Endothelial cell of umbilical vein (primary cell): ENCODE measurements at regions of chr5 and their contacts with region 1.

Region 1: GRCh38 chr5:90932052-90932699 is 373.6 kb downstream of the ADGRV1 start:
- DNase-seq: peak; percentile 93
- H3K4me3 ChIP-seq: no peak overlapping the region
- H3K27ac ChIP-seq: no peak overlapping the region
- H3K4me1 ChIP-seq: peaks cover 5% of the 10 kb centered on the region
- H3K27me3 ChIP-seq: no peaks in the 10 kb centered on the region
- CTCF ChIP-seq: peak; percentile 64 to 71
- POLR2A ChIP-seq: no peak

Region 2: DNA sequence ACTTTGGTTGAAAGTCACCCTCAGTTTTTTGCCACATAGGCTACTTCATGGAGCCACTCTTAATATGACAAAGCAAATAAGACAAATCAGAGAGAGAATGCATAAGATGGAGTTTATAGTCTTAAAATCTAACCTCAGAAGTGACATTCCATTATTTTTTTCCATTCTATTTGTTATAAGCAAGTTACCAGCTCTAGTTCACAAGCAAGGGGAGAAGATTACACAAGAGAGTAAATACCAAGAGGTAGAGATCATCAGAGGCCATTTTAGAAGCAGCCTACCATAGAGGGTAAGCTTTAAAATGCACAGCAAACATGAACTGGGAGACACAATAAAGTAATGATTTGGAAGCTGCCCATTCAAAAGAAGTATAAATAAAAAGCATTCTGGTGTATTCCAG is 1397.8 kb before region 1 on chr5:
- CTCF ChIA-PET with region 1: no interaction called
- POLR2A ChIA-PET with region 1: no interaction called
- dilution Hi-C with region 1: no loop called
- intact Hi-C with region 1: no loop called
- DNase-seq: no peak
- H3K4me3 ChIP-seq: no peak overlapping the region
- H3K27ac ChIP-seq: no peak overlapping the region
- H3K4me1 ChIP-seq: no peaks in the 10 kb centered on the region
- H3K27me3 ChIP-seq: no peaks in the 10 kb centered on the region
- CTCF ChIP-seq: no peak
- POLR2A ChIP-seq: no peak

Region 3: DNA sequence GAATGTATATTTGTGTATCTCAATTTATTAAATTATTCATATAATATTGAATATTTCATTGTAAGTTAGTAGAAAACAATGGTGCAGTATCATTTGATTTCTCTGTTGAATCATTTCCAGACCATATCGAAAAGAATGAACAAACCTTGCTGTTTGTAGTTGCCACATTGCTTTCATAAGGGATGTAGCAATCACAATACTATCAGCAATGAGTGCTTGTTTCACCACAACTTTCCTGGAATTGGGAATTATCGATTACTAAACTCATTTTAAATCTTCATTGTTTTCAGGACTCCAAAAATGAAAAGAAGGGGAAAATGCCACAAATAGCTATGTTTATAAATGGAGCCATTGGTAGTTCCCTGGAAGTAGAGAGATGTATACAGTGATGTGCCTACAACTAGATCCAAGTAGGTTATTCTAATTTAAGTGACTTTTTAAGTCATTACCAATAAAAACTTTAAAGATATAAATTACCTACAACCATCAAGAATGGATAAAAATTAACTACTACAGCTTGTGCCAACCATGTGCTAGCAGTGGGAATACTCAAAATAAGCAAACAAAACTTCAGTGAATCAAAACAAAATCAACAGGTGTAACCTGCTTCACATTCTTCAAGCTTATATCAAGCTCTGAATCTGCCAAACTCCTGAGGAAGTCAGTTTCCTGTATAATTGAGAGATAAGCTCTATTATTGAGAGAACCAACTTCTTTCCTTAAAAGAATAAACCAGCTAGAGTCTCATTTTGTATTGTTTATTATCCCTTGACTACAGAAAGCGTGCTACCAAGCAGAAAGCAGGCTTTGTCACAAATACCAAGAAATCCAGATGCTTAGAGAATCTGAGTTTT is 15.0 kb before region 1 on chr5:
- CTCF ChIA-PET with region 1: interaction called, 28 read pairs
- POLR2A ChIA-PET with region 1: no interaction called
- dilution Hi-C with region 1: no loop called
- intact Hi-C with region 1: no loop called
- DNase-seq: peak; percentile 79
- H3K4me3 ChIP-seq: no peak overlapping the region
- H3K27ac ChIP-seq: no peak overlapping the region
- H3K4me1 ChIP-seq: peaks cover 7% of the 10 kb centered on the region
- H3K27me3 ChIP-seq: no peaks in the 10 kb centered on the region
- CTCF ChIP-seq: no peak
- POLR2A ChIP-seq: no peak

Region 4: GRCh38 chr5:91052977-91053740 is 121.0 kb after region 1 on chr5:
- CTCF ChIA-PET with region 1: interaction called, 13 read pairs
- POLR2A ChIA-PET with region 1: no interaction called
- dilution Hi-C with region 1: no loop called
- intact Hi-C with region 1: loop called (anchors 2 kb)
- DNase-seq: peak; percentile 78
- H3K4me3 ChIP-seq: no peak overlapping the region
- H3K27ac ChIP-seq: peak overlapping the region; percentile 23
- H3K4me1 ChIP-seq: peaks cover 10% of the 10 kb centered on the region
- H3K27me3 ChIP-seq: no peaks in the 10 kb centered on the region
- CTCF ChIP-seq: no peak
- POLR2A ChIP-seq: no peak

Region 5: GRCh38 chr5:91101600-91102379 is 169.6 kb after region 1 on chr5:
- CTCF ChIA-PET with region 1: interaction called, 10 read pairs
- POLR2A ChIA-PET with region 1: no interaction called
- dilution Hi-C with region 1: no loop called
- intact Hi-C with region 1: loop called (anchors 1 kb)
- DNase-seq: peak; percentile 85
- H3K4me3 ChIP-seq: no peak overlapping the region
- H3K27ac ChIP-seq: no peak overlapping the region
- H3K4me1 ChIP-seq: no peaks in the 10 kb centered on the region
- H3K27me3 ChIP-seq: no peaks in the 10 kb centered on the region
- CTCF ChIP-seq: peak; percentile 67 to 70
- POLR2A ChIP-seq: no peak

Region 6: GRCh38 chr5:91219803-91220371 is 287.7 kb after region 1 on chr5:
- CTCF ChIA-PET with region 1: interaction called, 31 read pairs
- POLR2A ChIA-PET with region 1: no interaction called
- dilution Hi-C with region 1: no loop called
- intact Hi-C with region 1: loop called (anchors 2 kb)
- DNase-seq: peak; percentile 63
- H3K4me3 ChIP-seq: no peak overlapping the region
- H3K27ac ChIP-seq: no peak overlapping the region
- H3K4me1 ChIP-seq: no peaks in the 10 kb centered on the region
- H3K27me3 ChIP-seq: no peaks in the 10 kb centered on the region
- CTCF ChIP-seq: peak; percentile 30 to 57
- POLR2A ChIP-seq: no peak

Region 7: DNA sequence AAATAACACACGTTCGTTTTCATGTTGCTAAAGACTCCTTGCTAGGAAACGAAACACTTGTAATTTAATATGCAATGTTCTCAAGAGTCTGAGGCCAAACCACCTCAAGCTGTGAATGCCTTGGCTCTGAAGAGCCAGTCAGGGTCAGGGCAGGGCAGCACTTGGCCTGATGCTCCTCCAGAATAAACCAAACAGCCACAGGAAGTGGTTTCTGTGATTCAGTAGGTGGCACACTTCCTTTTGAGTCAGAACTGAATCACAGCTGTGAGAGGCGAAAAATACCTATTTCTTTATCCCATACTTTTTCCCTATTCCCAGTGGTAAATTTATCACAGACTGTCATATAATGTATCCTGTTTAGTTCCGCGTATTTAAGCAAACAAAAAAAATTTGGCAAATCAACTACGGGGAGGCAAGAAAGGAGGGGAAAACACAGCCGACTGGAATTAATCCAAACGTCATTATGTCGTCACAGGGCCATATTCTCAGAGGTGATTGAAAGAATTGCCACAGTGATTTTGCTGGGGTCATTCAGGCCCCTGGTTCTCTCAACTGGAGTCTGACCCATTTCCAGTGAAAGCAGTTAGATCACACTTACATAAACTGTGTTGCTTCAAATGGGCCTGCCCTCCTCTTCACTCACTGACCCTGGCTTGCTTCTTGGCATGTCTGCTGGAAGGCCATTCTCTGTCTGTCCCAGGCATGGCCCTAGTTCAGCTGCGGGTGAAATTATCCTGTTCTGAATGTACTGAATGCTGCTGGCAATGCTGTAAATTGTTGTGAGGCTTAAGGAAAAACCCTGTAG is 379.7 kb after region 1 on chr5:
- CTCF ChIA-PET with region 1: interaction called, 4 read pairs
- POLR2A ChIA-PET with region 1: no interaction called
- dilution Hi-C with region 1: no loop called
- intact Hi-C with region 1: loop called (anchors 5 kb)
- DNase-seq: peak; percentile 97
- H3K4me3 ChIP-seq: no peak overlapping the region
- H3K27ac ChIP-seq: peak overlapping the region; percentile 100
- H3K4me1 ChIP-seq: peaks cover 33% of the 10 kb centered on the region
- H3K27me3 ChIP-seq: no peaks in the 10 kb centered on the region
- CTCF ChIP-seq: no peak
- POLR2A ChIP-seq: no peak